ENCODE measurements at regions of chr3 and their contacts with region 1.

Region 1: GRCh38 chr3:12395349-12396012 is 88.8 kb upstream of the TSEN2 start:
- DNase-seq: peak; percentile 23
- H3K4me3 Mint-ChIP-seq: no peak overlapping the region
- H3K27ac Mint-ChIP-seq: no peak overlapping the region
- H3K4me1 Mint-ChIP-seq: peaks cover 11% of the 10 kb centered on the region
- H3K27me3 Mint-ChIP-seq: peaks cover 27% of the 10 kb centered on the region

Region 2: DNA sequence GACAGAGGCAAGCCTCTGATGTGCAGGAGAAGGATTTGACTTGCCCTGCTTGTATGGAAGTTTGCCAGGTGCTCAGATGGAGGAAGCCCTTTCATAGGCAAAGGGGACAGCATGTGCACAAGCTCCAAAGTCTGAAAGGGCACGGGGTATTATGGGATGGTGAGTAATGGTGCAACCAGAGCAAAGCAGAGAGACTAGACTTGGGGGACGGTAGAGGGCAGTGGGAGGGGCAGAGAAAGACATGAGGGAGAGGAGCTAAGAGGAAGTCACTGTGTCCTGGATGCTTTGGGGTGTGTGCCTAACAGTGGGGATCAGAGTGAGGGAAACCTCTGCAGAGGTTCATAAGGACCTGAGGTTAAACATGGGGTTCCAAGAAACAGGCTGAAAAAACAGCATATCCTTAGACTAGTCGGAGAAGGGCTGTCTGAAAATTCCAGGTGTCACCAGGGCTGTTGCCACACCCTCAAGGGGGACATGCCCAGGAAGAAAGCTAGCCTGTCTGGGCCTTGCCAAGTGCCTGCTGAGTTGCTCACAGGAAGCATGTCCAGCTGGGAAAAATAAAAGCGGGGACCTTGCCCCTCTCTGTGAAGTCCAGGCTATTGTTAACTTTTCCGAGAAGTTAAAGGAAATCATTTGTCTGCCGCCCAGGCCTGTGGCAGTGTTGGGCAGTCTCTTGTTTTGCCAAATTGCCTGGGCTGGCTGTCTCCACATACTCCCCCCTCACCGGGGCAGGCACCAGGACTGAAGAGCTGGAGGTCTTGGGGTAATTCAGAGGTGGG is 1194.0 kb before region 1 on chr3:
- CTCF ChIA-PET with region 1: no interaction called
- intact Hi-C with region 1: no loop called
- DNase-seq: no peak
- H3K4me3 Mint-ChIP-seq: no peak overlapping the region
- H3K27ac Mint-ChIP-seq: no peak overlapping the region
- H3K4me1 Mint-ChIP-seq: peaks cover 3% of the 10 kb centered on the region
- H3K27me3 Mint-ChIP-seq: peaks cover 19% of the 10 kb centered on the region

Region 3: DNA sequence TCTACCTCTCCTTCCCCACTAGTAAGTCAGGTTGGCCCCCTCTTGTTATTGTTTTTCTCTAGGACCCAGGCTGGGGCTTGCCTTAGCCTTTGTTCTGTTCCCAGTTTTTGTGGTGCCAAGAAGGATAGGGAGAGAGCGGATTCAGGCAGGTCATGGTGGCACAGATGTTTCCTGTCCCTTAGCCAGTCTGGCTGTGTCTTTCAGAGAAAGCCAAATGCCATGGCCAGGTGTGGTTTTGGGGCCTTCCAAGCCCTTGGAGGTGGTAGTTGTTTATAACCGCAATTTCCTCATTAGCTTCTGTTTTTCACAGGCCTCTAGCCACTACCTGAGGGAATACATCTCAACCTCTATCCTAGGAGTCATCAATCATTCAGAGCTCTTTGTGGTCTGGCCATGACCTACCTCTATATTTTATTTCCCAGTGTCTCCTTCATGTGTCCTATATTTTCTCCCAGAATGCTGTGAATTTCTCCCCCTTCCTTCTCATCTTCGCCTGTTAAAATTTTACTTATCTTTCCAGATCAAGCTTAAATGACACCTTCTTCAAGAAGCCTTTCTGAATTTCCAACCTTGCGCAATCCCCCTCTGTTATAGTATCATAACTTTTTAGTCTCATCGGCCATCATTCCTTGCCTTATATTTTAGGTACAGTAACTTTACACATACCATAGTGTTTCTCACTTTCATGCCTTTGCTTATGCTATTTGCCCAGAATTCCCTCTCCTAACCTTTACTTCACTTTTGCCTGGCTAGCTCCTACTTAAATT is 274.9 kb before region 1 on chr3:
- CTCF ChIA-PET with region 1: no interaction called
- intact Hi-C with region 1: no loop called
- DNase-seq: no peak
- H3K4me3 Mint-ChIP-seq: no peak overlapping the region
- H3K27ac Mint-ChIP-seq: no peak overlapping the region
- H3K4me1 Mint-ChIP-seq: peaks cover 2% of the 10 kb centered on the region
- H3K27me3 Mint-ChIP-seq: peaks cover 22% of the 10 kb centered on the region

Region 4: DNA sequence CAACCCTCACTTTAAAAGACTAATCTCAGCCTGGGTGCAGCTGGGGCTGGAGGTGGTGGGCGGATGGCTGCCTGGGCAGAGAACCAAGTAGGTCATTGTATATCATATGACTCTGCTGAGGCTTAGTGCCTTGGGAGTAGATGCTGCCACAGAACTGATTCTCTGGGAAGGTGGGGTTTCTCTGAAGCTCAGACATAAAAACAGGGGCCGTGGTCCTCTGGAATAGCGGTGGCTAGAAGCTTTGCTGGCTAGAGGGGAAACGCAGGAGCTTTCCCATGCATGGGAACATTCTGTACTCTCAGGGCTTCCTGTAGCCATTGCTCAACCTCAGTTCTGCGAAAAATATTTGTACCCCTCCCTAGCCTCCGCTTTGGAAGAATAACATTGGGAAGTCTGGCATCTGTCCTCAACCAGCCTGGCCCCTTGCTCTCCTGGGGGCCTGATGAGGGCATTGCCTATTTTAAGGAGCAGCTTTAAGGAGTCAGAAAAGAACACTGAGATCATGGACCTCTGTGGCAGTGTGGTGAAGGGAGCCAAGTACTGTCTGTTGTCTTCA is 251.5 kb before region 1 on chr3:
- CTCF ChIA-PET with region 1: no interaction called
- intact Hi-C with region 1: no loop called
- DNase-seq: no peak
- H3K4me3 Mint-ChIP-seq: no peak overlapping the region
- H3K27ac Mint-ChIP-seq: no peak overlapping the region
- H3K4me1 Mint-ChIP-seq: no peaks in the 10 kb centered on the region
- H3K27me3 Mint-ChIP-seq: peaks cover 2% of the 10 kb centered on the region

Region 5: DNA sequence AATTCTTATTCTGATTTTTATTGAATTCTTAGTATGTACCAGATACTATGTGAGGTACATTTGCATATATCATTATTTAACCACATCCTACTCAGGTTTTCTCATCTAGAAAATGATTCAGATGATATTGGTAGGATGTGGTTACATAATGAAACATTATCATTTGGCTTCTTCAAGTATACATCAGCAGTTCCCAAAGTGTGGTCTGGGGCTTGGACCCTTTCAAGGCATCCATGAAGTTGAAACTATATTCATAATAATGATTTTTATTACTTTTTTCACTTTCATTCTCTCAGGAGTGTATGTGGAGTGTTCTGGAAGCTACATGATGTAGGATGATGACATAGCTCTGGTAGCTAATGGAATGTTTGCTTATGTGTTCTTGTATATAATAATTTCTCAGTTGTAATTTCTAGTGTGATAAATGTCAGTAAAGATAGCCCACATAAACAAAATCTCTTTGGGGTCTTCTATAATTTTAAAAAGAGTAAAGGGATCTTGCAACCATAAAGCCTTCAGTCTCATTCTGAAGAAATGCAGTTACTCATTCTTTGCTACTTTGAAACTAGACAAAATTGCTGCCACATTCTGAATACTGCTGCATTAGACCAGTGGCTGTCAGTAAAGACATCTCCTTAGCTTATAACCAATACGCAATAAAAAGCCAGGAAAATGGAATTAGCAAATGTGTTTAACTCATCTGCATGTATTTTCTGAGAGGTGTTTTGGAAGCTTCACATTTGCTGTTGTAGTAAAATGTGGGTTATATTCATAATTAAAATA is 10.8 kb before region 1 on chr3:
- CTCF ChIA-PET with region 1: no interaction called
- intact Hi-C with region 1: loop called (anchors 1 kb)
- DNase-seq: peak; percentile 21
- H3K4me3 Mint-ChIP-seq: no peak overlapping the region
- H3K27ac Mint-ChIP-seq: no peak overlapping the region
- H3K4me1 Mint-ChIP-seq: peaks cover 6% of the 10 kb centered on the region
- H3K27me3 Mint-ChIP-seq: peaks cover 19% of the 10 kb centered on the region

Region 6: GRCh38 chr3:12471243-12471651 is 75.8 kb after region 1 on chr3:
- CTCF ChIA-PET with region 1: interaction called, 3 read pairs
- intact Hi-C with region 1: loop called (anchors 1 kb)
- DNase-seq: peak; percentile 89
- H3K4me3 Mint-ChIP-seq: no peak overlapping the region
- H3K27ac Mint-ChIP-seq: peak overlapping the region; percentile 71
- H3K4me1 Mint-ChIP-seq: peaks cover 22% of the 10 kb centered on the region
- H3K27me3 Mint-ChIP-seq: no peaks in the 10 kb centered on the region